ENCODE measurements at regions of chr3 and their contacts with region 1.

Region 1: DNA sequence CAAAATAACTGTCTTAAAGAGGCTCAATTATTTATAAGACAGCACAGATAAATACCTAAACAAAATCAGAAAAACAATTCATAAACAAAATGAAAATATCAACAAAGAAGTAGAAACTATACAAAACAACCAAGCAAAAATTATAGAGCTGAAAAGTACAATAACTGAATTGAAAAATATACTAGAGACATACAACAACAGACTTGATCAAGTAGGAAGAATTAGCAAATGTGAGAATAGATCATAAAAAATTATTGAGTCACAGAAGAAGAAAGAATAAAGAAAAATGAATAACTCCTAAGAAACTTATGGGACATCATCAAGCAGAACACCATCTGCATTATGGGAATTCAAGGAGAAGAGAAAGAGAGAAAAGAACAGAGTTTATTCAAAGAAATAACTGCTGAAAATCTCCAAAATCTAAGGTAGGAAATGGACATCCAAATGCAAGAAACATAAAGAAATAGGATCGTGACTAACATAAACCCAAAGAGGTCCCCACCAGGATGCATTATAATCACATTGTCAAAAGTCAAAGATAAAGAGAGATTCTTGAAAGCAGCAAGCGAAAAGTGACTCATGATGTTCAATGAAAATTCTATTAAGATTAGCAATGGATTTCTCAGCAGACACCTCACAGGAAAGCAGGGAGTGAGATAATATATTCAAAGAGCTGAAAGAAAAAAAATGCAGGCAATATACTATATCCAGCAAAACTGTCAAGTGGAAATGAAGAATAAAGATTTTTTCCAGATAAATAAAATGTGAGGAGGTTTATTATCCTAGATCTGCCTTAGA is 85.9 kb downstream of the DCLK3 start:
- DNase-seq: no peak
- H3K4me3 Mint-ChIP-seq: no peak overlapping the region
- H3K27ac Mint-ChIP-seq: no peak overlapping the region
- H3K4me1 Mint-ChIP-seq: no peaks in the 10 kb centered on the region
- H3K27me3 Mint-ChIP-seq: peaks cover 2% of the 10 kb centered on the region

Region 2: GRCh38 chr3:36693670-36694069 is 15.3 kb after region 1 on chr3:
- CTCF ChIA-PET with region 1: no interaction called
- POLR2A ChIA-PET with region 1: interaction called, 13 read pairs
- DNase-seq: no peak
- H3K4me3 Mint-ChIP-seq: no peak overlapping the region
- H3K27ac Mint-ChIP-seq: no peak overlapping the region
- H3K4me1 Mint-ChIP-seq: no peaks in the 10 kb centered on the region
- H3K27me3 Mint-ChIP-seq: peaks cover 2% of the 10 kb centered on the region

Region 3: DNA sequence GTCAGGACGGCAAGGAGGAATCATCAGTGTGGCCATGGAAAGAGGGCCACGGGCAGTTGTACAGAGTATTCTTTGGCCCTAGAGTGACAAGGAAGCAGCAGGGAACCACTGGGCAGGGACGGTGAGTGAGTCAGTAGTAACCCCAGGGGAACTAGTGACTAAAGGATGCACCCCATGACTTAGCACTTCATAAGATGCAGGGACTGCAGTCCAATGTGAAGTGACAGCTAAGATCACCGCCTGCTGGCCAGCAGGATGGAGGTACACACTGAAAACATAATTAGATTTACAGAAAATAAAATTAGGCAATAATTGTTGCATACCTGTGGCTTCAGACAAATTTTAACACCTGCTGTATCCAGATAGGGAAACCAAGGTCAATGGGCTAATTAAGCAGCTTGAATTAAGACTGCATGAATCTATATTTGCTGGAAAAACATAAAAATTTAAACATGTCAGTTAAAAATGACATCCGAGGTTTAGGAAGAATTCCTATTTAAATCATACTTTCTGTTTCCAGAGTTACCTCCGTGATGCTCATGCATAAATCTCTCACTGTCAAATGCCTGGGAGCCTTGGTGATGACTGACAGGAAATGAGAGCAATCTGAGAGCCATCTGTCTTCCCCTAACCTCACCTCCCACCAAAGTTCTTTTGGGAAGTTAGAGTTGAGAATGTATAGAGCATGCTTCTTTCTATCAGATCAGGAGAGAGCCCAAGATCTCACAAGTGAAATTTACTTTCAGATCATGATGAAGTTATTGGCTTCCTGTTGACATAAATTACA is 29.4 kb after region 1 on chr3:
- CTCF ChIA-PET with region 1: no interaction called
- POLR2A ChIA-PET with region 1: no interaction called
- DNase-seq: no peak
- H3K4me3 Mint-ChIP-seq: no peak overlapping the region
- H3K27ac Mint-ChIP-seq: no peak overlapping the region
- H3K4me1 Mint-ChIP-seq: peaks cover 3% of the 10 kb centered on the region
- H3K27me3 Mint-ChIP-seq: no peaks in the 10 kb centered on the region

Measured in activated CD4-positive, alpha-beta T cell treated with anti-CD3 and anti-CD28 coated beads, Interleukin-2, amount 10 ng/mL, durations not matched to agents 7 days and 5 days (primary cell).